Common myeloid progenitor, CD34-positive (primary cell): ENCODE measurements at regions of chr15 and their contacts with region 1.

Region 1: DNA sequence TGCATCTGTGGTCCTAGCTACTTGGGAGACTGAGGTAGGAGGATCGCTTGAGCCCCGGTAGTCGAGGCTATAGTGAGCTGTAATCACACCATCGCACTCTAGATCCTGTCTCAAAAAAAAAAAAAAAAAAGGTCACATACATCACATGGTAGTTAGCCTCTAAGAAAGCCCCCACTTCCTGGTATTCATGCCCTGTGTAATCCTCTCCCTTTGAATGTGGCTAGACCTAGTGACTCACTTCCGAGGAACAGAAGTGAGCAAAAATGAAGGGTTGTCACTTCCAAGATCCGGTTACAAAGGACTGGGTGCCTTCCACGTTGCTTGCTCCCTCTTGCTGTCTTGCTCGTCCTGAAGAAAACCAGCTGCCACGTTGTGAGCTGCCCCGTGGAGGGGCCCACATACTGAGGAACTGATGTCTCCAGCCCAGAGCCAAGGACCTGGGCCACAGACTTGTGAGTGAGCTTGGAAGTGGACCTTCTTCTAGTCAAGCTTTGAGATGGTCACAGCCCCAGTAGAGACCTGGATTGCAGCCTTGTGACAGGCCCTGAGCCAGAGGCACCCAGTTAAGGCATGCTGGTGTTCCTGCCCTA is 12.6 kb upstream of the LCTL start:
- DNase-seq: no peak
- H3K4me3 ChIP-seq: no peak overlapping the region
- H3K27ac ChIP-seq: no peak overlapping the region
- H3K4me1 ChIP-seq: peaks cover 0 to 7% (median 0%) of the 10 kb centered on the region in 4 experiments
- H3K27me3 ChIP-seq: no peaks in the 10 kb centered on the region

Region 2: DNA sequence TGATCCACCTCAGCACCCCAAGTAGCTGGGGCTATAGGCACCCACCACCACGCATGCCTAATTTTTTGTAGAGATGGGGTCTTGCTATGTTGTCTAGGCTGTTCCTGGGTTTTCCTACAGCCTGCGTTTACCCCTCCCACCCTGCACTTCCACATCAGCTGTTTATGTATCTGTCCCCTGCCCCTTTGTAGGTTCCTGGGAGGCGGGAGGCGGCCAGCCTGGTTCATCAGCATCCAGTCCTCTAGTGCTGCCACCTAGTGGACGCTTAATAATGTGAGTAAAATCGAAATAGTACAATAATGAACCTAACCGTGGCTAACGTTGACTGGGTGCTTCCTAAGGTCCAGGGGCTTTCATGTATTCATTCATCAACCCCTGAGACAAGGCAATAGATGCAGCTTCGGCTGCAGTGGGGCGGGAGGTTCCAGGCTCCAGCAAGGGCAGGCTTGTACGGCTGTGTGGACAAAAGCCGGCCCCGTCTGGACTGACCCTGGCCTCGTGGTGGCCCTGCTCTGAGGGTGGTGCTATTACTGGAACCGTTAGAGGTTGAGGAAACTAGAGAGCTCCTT is 11.3 kb before region 1 on chr15:
- CTCF ChIA-PET with region 1: interaction called, 18 read pairs
- POLR2A ChIA-PET with region 1: no interaction called
- DNase-seq: peak; percentile 60 to 78 (median 72)
- H3K4me3 ChIP-seq: no peak overlapping the region
- H3K27ac ChIP-seq: no peak overlapping the region
- H3K4me1 ChIP-seq: peaks cover 0 to 2% (median 0%) of the 10 kb centered on the region in 4 experiments
- H3K27me3 ChIP-seq: no peaks in the 10 kb centered on the region